Activated CD8-positive, alpha-beta T cell treated with anti-CD3 and anti-CD28 coated beads, Interleukin-2, amount 10 ng/mL, durations not matched to agents 7 days and 5 days (primary cell): ENCODE measurements at regions of chr12 and their contacts with region 1.

Region 1: GRCh38 chr12:101823891-101824290 is 6.9 kb downstream of the GNPTAB start:
- DNase-seq: peak; percentile 88
- ATAC-seq: peak; percentile 97
- H3K4me3 Mint-ChIP-seq: peak overlapping the region; percentile 58
- H3K27ac Mint-ChIP-seq: peak overlapping the region; percentile 77
- H3K4me1 Mint-ChIP-seq: peaks cover 88% of the 10 kb centered on the region
- H3K27me3 Mint-ChIP-seq: no peaks in the 10 kb centered on the region

Region 2: GRCh38 chr12:101792051-101792931 is 31.6 kb before region 1 on chr12:
- CTCF ChIA-PET with region 1: interaction called, 263 read pairs
- POLR2A ChIA-PET with region 1: interaction called, 45 read pairs
- DNase-seq: no peak
- ATAC-seq: peak; percentile 20
- H3K4me3 Mint-ChIP-seq: no peak overlapping the region
- H3K27ac Mint-ChIP-seq: peak overlapping the region; percentile 65
- H3K4me1 Mint-ChIP-seq: peaks cover 60% of the 10 kb centered on the region
- H3K27me3 Mint-ChIP-seq: no peaks in the 10 kb centered on the region

Region 3: GRCh38 chr12:101799774-101800173 is 24.1 kb before region 1 on chr12:
- CTCF ChIA-PET with region 1: interaction called, 263 read pairs
- POLR2A ChIA-PET with region 1: interaction called, 45 read pairs
- DNase-seq: no peak
- ATAC-seq: peak; percentile 65
- H3K4me3 Mint-ChIP-seq: peak overlapping the region; percentile 27
- H3K27ac Mint-ChIP-seq: peak overlapping the region; percentile 71
- H3K4me1 Mint-ChIP-seq: peaks cover 71% of the 10 kb centered on the region
- H3K27me3 Mint-ChIP-seq: no peaks in the 10 kb centered on the region

Region 4: DNA sequence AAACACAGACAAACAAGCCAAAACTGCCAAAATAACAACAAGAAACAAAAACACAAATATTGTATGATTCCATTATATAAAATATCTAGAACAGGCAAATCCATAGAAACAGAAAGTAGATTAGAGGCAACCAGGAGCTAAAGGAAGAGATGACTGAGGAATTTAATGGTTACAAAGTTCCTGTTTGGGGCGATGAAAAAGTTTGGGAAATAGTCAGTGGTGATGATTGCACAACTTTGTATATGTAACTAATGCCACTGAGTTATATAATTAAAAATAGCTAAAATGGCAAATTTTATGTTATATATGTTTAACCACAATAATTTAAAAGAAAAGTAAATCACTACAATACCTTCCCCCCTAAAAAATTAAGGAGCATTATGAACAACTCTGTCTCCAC is 17.6 kb before region 1 on chr12:
- CTCF ChIA-PET with region 1: interaction called, 20 read pairs
- POLR2A ChIA-PET with region 1: interaction called, 4 read pairs
- DNase-seq: no peak
- ATAC-seq: no peak
- H3K4me3 Mint-ChIP-seq: no peak overlapping the region
- H3K27ac Mint-ChIP-seq: no peak overlapping the region
- H3K4me1 Mint-ChIP-seq: peaks cover 59% of the 10 kb centered on the region
- H3K27me3 Mint-ChIP-seq: no peaks in the 10 kb centered on the region